ENCODE measurements at regions of chr15 and their contacts with region 1.

Region 1: DNA sequence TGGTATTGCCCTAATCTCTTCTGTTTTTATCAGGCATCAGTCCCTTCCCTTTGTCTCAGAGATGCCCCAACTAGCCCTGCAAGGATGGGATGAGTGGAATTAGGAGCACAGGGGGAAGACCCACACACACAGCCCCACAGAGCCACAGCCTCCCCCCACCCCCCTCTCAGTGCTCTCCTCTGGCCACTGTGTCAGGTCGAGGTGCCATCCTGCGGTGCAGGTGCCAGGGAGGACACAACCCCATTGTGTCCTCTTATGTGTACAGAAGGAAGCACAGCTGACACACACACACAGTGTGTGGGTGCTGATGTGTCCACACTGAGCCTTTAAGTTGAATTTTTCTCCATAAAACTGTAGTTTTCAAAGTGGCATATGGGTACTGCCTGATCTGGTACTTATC is 534.5 kb downstream of the OCA2 start:
- DNase-seq: no peak
- H3K4me3 ChIP-seq: no peak overlapping the region
- H3K27ac ChIP-seq: no peak overlapping the region
- H3K4me1 ChIP-seq: no peaks in the 10 kb centered on the region
- H3K27me3 ChIP-seq: no peaks in the 10 kb centered on the region
- CTCF ChIP-seq: no peak

Region 2: GRCh38 chr15:27514526-27514925 is 50.1 kb before region 1 on chr15:
- intact Hi-C with region 1: loop called (anchors 5 kb)
- DNase-seq: no peak
- H3K4me3 ChIP-seq: no peak overlapping the region
- H3K27ac ChIP-seq: no peak overlapping the region
- H3K4me1 ChIP-seq: no peaks in the 10 kb centered on the region
- H3K27me3 ChIP-seq: no peaks in the 10 kb centered on the region
- CTCF ChIP-seq: no peak

Measured in colonic mucosa (tissue), 4 donors.